ENCODE measurements at regions of chr11 and their contacts with region 1.

Region 1: GRCh38 chr11:124746621-124747243 is 5.3 kb downstream of the VSIG2 start:
- DNase-seq: peak; percentile 69
- H3K4me3 Mint-ChIP-seq: peak overlapping the region; percentile 95
- H3K27ac Mint-ChIP-seq: peak overlapping the region; percentile 94
- H3K4me1 Mint-ChIP-seq: peaks cover 14% of the 10 kb centered on the region
- H3K27me3 Mint-ChIP-seq: peaks cover 8% of the 10 kb centered on the region

Region 2: GRCh38 chr11:124788521-124788920 is 41.8 kb after region 1 on chr11:
- intact Hi-C with region 1: no loop called
- DNase-seq: no peak
- H3K4me3 Mint-ChIP-seq: no peak overlapping the region
- H3K27ac Mint-ChIP-seq: no peak overlapping the region
- H3K4me1 Mint-ChIP-seq: peaks cover 27% of the 10 kb centered on the region
- H3K27me3 Mint-ChIP-seq: no peaks in the 10 kb centered on the region

Region 3: GRCh38 chr11:124800226-124800929 is 53.6 kb after region 1 on chr11 and contains the start of gene MSANTD2:
- intact Hi-C with region 1: loop called (anchors 2 kb)
- DNase-seq: peak; percentile 76
- H3K4me3 Mint-ChIP-seq: peak within 1 kb of the TSS; percentile 92
- H3K27ac Mint-ChIP-seq: peak within 1 kb of the TSS; percentile 80
- H3K4me1 Mint-ChIP-seq: peaks cover 27% of the 10 kb centered on the region
- H3K27me3 Mint-ChIP-seq: peaks cover 11% of the 10 kb centered on the region
- total RNA-seq, gene MSANTD2: 10.5 and 10.8 TPM in 2 replicates

Region 4: DNA sequence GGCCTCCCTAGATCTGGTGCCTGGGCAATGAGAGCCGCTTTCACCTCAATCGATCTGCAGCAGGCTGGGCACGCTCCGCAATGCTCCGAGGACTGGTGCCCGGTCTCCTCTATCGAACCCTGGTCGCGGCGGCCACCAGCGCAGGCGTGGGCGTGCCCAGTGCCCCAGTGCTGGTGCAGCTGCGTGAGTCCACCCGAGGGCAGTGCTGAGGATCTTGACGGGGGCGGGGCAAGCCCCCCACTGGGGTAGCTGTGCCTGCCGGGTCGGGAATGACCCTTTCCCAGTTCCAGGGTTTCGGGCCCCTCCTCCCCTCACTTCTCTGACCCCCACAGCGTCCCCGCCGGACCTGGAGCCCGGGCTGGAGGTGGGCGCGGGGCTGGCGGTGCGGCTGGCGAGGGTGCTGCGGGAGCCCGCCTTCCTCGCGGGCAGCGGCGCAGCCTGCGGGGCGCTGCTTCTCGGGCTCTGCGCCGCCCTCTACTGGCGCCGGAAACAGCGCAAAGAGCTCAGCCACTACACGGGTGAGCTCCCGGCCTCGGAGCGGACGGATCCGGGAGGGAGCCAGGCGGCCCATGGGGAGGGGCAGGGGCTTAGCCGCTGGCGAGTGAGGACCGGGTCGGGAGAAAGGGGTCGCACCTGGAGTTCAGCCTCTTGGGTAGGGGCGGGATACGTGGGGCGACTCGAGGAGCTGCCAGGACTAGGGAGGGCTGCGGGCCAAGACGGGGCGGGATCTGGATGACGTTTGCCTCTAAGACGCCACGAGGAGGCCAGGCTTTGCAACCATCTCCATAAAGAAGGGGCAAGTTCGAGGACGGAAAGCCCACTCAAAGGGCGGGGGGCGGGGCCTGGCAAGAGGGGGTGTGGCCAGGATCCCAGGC is 129.4 kb after region 1 on chr11:
- intact Hi-C with region 1: loop called (anchors 5 kb)
- DNase-seq: peak; percentile 76
- H3K4me3 Mint-ChIP-seq: peak overlapping the region; percentile 82
- H3K27ac Mint-ChIP-seq: peak overlapping the region; percentile 86
- H3K4me1 Mint-ChIP-seq: peaks cover 12% of the 10 kb centered on the region
- H3K27me3 Mint-ChIP-seq: peaks cover 42% of the 10 kb centered on the region

Measured in activated T-helper 2 cell treated with anti-CD3 and anti-CD28 coated beads, Interferon-gamma antibody, Interleukin-2, Interleukin-4, amounts not matched to agents 10 μg/mL and 5 μg/mL and 100 μg/mL, durations not matched to agents 14 hours and 24 hours and 36 hours (primary cell).